HepG2 (cell line): ENCODE measurements at regions of chr10 and their contacts with region 1.

Region 1: GRCh38 chr10:28432210-28432676 is 100.7 kb upstream of the WAC start:
- DNase-seq: peak; percentile 66
- ATAC-seq: peak; percentile 80
- H3K4me3 ChIP-seq: peak overlapping the region in 2 of 3 experiments; percentile 23 to 26; a peak in 1 of 6 replicates
- H3K27ac ChIP-seq: no peak overlapping the region
- H3K4me1 ChIP-seq: peaks cover 15% of the 10 kb centered on the region
- H3K27me3 ChIP-seq: peaks cover 2 to 7% of the 10 kb centered on the region in 2 experiments; a peak in 2 of 5 replicates
- CTCF ChIP-seq: peak; percentile 73
- EP300 ChIP-seq: no peak
- POLR2A ChIP-seq: no peak
- RAD21 ChIP-seq: 0 out of 2 replicates have a peak, but pooled peaks have one; percentile 36

Region 2: DNA sequence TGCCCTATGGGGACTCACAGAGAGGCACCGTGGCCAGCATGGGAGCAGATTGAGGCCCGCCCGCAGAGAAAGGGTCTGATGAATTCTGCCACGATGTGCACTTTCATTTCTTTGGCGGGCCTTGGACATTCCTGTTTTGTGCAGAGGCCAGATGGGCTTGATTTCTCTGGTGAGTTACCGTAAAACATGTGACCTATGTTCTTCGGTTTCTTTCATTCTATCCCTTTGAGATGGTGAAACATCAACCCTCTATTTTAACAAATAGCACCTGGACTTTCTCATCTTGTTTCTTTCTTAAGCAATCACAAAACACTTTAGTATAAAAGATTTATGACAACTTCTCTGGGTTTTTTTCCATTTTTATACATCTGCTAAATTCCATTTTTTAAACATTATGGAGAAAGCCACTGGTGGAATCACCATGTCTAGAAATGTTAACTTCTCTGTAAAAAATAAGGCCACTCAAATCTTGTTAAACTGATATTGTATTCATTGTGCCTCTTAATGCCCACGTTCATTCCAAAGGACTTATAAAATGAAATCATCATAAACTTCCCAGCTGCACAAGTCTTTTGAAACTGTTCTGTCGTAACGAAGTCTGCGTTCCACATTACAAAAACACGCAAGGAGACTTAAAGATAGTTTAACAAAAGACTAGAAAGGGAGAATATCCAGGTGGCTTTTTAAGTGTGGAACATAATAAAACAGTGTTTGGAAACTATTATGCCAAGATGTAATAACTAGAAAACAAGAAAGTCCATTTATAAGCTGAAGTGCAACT is 412.0 kb before region 1 on chr10:
- CTCF ChIA-PET with region 1: no interaction called
- POLR2A ChIA-PET with region 1: no interaction called
- in situ Hi-C with region 1: no loop called
- intact Hi-C with region 1: no loop called
- DNase-seq: no peak
- ATAC-seq: no peak
- H3K4me3 ChIP-seq: no peak overlapping the region
- H3K27ac ChIP-seq: no peak overlapping the region
- H3K4me1 ChIP-seq: no peaks in the 10 kb centered on the region
- H3K27me3 ChIP-seq: peaks cover 0 to 3% of the 10 kb centered on the region in 2 experiments; a peak in 1 of 5 replicates
- CTCF ChIP-seq: no peak
- EP300 ChIP-seq: no peak
- POLR2A ChIP-seq: no peak
- RAD21 ChIP-seq: no peak

Region 3: GRCh38 chr10:28587970-28588290 is 155.7 kb after region 1 on chr10:
- CTCF ChIA-PET with region 1: no interaction called
- POLR2A ChIA-PET with region 1: no interaction called
- in situ Hi-C with region 1: no loop called
- intact Hi-C with region 1: loop called (anchors 1 kb)
- DNase-seq: no peak
- ATAC-seq: peak; percentile 39; the same call in 1 of the 3 replicates
- H3K4me3 ChIP-seq: no peak overlapping the region
- H3K27ac ChIP-seq: no peak overlapping the region
- H3K4me1 ChIP-seq: no peaks in the 10 kb centered on the region
- H3K27me3 ChIP-seq: no peaks in the 10 kb centered on the region
- CTCF ChIP-seq: no peak
- EP300 ChIP-seq: no peak
- POLR2A ChIP-seq: no peak
- RAD21 ChIP-seq: no peak